BJ (cell line): ENCODE measurements at regions of chr4 and their contacts with region 1.

Region 1: DNA sequence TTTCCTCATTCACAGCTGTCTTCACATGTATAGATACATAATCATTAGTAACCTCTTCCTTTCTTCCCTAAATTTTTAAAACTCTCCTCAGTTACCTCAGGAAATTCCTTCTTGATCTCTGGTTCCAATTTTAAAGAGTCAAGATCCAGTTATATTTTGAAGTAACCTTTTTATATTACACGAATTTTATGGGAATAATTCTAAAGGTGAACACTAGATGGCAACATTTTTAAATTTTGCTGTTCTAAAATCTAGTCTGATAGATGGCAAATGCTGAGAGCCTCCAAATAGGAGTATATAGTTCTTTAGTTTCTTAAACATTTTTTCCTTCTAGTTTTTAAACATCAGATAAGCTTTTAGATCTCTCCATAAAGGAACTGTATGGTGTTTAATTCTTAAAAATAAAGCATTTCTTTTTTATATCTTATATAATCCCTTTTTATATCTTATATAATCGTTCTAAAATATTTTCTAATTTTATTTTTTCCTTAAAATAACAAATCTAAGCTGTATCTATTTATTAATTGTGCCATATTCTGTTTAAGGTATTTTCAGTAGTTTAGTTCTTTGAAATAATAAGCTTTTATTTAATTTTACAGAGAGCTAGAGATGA is 37.9 kb upstream of the PAPSS1 start:
- DNase-seq: no peak
- H3K4me3 ChIP-seq: no peak overlapping the region
- H3K27me3 ChIP-seq: 0 out of 2 replicates have a peak, but pooled peaks cover 1% of the 10 kb centered on the region
- CTCF ChIP-seq: peak; percentile 30; the same call in 1 of the 2 replicates

Region 2: GRCh38 chr4:107709916-107710315 is 48.1 kb before region 1 on chr4:
- CTCF ChIA-PET with region 1: no interaction called
- POLR2A ChIA-PET with region 1: no interaction called
- DNase-seq: no peak
- H3K4me3 ChIP-seq: no peak overlapping the region
- H3K27me3 ChIP-seq: no peaks in the 10 kb centered on the region
- CTCF ChIP-seq: no peak

Region 3: GRCh38 chr4:107747748-107748486 is 10.1 kb before region 1 on chr4:
- CTCF ChIA-PET with region 1: interaction called, 11 read pairs
- POLR2A ChIA-PET with region 1: no interaction called
- DNase-seq: no peak
- H3K4me3 ChIP-seq: no peak overlapping the region
- H3K27me3 ChIP-seq: peaks cover 12% of the 10 kb centered on the region; the same call in 1 of the 2 replicates
- CTCF ChIP-seq: no peak

Region 4: DNA sequence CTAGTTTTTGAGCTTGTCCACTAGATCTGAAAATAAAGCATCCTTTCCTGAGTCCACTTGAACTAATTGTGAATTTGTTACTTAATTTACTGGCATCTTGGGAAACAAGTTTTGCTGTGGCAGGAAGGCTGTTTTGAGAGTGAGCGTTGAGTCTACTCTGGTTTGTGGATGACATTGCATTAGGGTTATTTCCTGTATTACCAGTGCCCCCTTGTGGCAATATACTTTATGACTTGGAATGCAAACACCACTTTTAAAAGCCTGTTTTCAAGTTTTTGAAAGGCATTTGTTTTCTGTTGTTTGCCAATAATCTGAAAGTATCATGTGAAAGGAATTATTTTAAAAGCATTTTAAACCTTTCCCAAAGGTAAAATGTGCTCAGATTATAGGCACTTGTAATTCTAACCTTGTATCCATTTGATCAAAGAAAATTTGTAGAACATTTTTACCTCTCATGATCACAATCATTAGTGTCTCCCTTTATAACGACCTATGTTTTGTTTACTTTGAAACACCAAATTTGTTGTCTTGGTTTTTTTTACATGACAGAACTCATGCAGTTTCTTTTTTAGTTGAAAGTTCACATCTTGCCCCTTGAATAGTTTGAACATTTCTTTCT is 155.4 kb after region 1 on chr4:
- CTCF ChIA-PET with region 1: interaction called, 34 read pairs
- POLR2A ChIA-PET with region 1: no interaction called
- DNase-seq: peak; percentile 9
- H3K4me3 ChIP-seq: no peak overlapping the region
- H3K27me3 ChIP-seq: no peaks in the 10 kb centered on the region
- CTCF ChIP-seq: peak; percentile 60

Region 5: GRCh38 chr4:108094923-108095482 is 337.0 kb after region 1 on chr4:
- CTCF ChIA-PET with region 1: no interaction called
- POLR2A ChIA-PET with region 1: no interaction called
- DNase-seq: no peak
- H3K4me3 ChIP-seq: no peak overlapping the region
- H3K27me3 ChIP-seq: no peaks in the 10 kb centered on the region
- CTCF ChIP-seq: no peak